ENCODE measurements at regions of chr14 and their contacts with region 1.

Region 1: GRCh38 chr14:70972107-70972976 is 65.1 kb downstream of the PCNX1 start:
- DNase-seq: peak; percentile 92
- ATAC-seq: peak; percentile 86

Region 2: DNA sequence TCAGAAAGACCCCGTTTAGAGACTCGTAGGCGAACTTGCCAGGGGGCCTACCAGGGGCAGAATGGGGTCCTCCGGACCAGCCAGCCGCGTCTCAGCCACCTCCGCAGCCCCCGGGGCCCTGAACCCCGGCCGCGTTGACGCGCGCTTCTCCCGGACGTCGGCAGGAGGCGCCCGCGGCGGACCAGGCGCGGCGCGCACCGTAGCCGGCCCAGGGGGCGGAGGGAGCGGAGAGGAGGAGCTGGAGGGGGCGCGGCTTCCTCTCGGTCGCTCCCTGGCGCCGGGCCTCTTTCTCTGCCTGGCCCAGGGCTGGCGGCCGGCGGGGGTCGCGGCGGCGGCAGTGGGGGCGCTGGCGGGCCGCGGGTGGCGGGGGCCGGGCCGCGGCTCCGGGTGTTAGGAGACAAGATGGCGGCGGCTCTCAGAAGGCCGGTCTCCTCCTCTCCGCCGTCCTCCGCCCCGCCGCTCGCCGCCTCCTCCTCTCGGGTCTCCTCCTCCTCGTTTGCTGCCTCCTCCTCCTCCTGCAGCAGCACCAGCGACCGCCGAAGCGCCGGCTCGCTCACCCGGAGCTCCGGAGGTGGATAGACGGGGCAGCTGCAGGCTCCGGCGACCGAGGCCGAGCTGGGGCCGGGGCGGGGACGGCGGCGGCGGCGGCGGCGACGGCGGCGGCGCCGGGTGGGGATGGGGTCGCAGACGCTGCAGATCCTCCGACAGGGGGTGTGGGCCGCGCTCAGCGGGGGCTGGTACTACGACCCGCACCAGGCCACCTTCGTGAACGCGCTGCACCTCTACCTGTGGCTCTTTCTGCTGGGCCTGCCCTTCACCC is 65.0 kb before region 1 on chr14 and contains the start of gene PCNX1:
- intact Hi-C with region 1: loop called (anchors 10 kb)
- DNase-seq: peak; percentile 93
- ATAC-seq: peak; percentile 94
- total RNA-seq, gene PCNX1: 84.3 TPM

Region 3: GRCh38 chr14:70919774-70920173 is 52.6 kb before region 1 on chr14:
- intact Hi-C with region 1: no loop called
- DNase-seq: no peak
- ATAC-seq: no peak

Measured in sciatic nerve (tissue), 2 donors.